Upper lobe of right lung (tissue), 1 donor: ENCODE measurements at regions of chr19 and their contacts with region 1.

Region 1: GRCh38 chr19:44657211-44657921 is 13.7 kb downstream of the PVR start:
- DNase-seq: peak; percentile 81
- ATAC-seq: peak; percentile 79
- H3K4me3 ChIP-seq: no peak overlapping the region
- H3K27ac ChIP-seq: no peak overlapping the region
- H3K4me1 ChIP-seq: peaks cover 3% of the 10 kb centered on the region
- H3K27me3 ChIP-seq: no peaks in the 10 kb centered on the region
- CTCF ChIP-seq: peak; percentile 96

Region 2: GRCh38 chr19:44570984-44571684 is 86.2 kb before region 1 on chr19:
- intact Hi-C with region 1: loop called (anchors 5 kb)
- DNase-seq: no peak
- ATAC-seq: peak; percentile 90
- H3K4me3 ChIP-seq: no peak overlapping the region
- H3K27ac ChIP-seq: no peak overlapping the region
- H3K4me1 ChIP-seq: no peaks in the 10 kb centered on the region
- H3K27me3 ChIP-seq: peaks cover 8% of the 10 kb centered on the region
- CTCF ChIP-seq: peak; percentile 81